ENCODE measurements at regions of chr16 and their contacts with region 1.

Region 1: DNA sequence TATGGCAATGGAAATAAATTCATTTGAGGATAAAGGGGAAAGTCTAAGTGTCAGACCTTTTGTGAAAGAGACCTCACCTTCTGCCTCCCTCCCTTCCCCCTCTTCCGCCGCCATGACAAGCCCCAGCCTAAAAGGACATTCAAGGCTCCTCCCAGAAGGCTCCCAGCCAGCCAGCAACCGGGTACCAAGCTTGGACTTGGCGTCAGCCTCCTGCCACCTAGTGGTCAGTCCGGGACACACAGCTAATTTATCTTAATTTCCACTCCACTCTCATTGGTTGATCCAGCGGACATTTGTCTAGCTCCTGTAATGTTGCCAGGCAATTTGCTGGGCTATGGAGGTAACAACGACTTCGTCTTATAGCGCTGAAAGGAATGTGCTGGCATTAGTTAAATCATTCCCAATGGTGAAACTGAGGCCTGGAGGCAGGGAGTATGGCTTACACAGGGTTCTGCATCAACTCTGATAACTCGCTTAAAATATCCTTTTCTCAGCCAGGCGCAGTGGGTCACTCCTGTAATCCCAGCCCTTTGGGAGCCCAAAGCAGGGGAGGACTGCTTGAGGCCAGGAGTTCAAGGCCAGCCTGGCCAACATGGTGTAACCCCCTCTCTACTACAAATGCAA is 19.3 kb upstream of the CLEC3A start:
- DNase-seq: peak; percentile 90
- H3K4me3 Mint-ChIP-seq: no peak overlapping the region
- H3K27ac Mint-ChIP-seq: no peak overlapping the region
- H3K4me1 Mint-ChIP-seq: peaks cover 7% of the 10 kb centered on the region
- H3K27me3 Mint-ChIP-seq: no peaks in the 10 kb centered on the region
- CTCF ChIP-seq: peak; percentile 91

Region 2: GRCh38 chr16:77675464-77676324 is 327.3 kb before region 1 on chr16:
- CTCF ChIA-PET with region 1: interaction called, 13 read pairs
- POLR2A ChIA-PET with region 1: no interaction called
- intact Hi-C with region 1: loop called (anchors 1 kb)
- DNase-seq: peak; percentile 78
- H3K4me3 Mint-ChIP-seq: no peak overlapping the region
- H3K27ac Mint-ChIP-seq: no peak overlapping the region
- H3K4me1 Mint-ChIP-seq: no peaks in the 10 kb centered on the region
- H3K27me3 Mint-ChIP-seq: peaks cover 7% of the 10 kb centered on the region
- CTCF ChIP-seq: peak; percentile 80

Region 3: GRCh38 chr16:77833921-77834634 is 168.9 kb before region 1 on chr16:
- CTCF ChIA-PET with region 1: no interaction called
- POLR2A ChIA-PET with region 1: no interaction called
- intact Hi-C with region 1: no loop called
- DNase-seq: peak; percentile 72
- H3K4me3 Mint-ChIP-seq: no peak overlapping the region
- H3K27ac Mint-ChIP-seq: no peak overlapping the region
- H3K4me1 Mint-ChIP-seq: peaks cover 13% of the 10 kb centered on the region
- H3K27me3 Mint-ChIP-seq: peaks cover 12% of the 10 kb centered on the region
- CTCF ChIP-seq: no peak

Region 4: GRCh38 chr16:77928096-77928495 is 74.9 kb before region 1 on chr16:
- CTCF ChIA-PET with region 1: no interaction called
- POLR2A ChIA-PET with region 1: no interaction called
- intact Hi-C with region 1: no loop called
- DNase-seq: no peak
- H3K4me3 Mint-ChIP-seq: no peak overlapping the region
- H3K27ac Mint-ChIP-seq: no peak overlapping the region
- H3K4me1 Mint-ChIP-seq: no peaks in the 10 kb centered on the region
- H3K27me3 Mint-ChIP-seq: peaks cover 18% of the 10 kb centered on the region
- CTCF ChIP-seq: no peak

Region 5: GRCh38 chr16:78022347-78023060 is 19.5 kb after region 1 on chr16 and contains the start of gene CLEC3A:
- CTCF ChIA-PET with region 1: interaction called, 22 read pairs
- POLR2A ChIA-PET with region 1: interaction called, 3 read pairs
- intact Hi-C with region 1: no loop called
- DNase-seq: no peak
- H3K4me3 Mint-ChIP-seq: no peak within 1 kb of the TSS
- H3K27ac Mint-ChIP-seq: no peak within 1 kb of the TSS
- H3K4me1 Mint-ChIP-seq: no peaks in the 10 kb centered on the region
- H3K27me3 Mint-ChIP-seq: peaks cover 22% of the 10 kb centered on the region
- CTCF ChIP-seq: no peak
- total RNA-seq, gene CLEC3A: not detected in 2 replicates

Region 6: DNA sequence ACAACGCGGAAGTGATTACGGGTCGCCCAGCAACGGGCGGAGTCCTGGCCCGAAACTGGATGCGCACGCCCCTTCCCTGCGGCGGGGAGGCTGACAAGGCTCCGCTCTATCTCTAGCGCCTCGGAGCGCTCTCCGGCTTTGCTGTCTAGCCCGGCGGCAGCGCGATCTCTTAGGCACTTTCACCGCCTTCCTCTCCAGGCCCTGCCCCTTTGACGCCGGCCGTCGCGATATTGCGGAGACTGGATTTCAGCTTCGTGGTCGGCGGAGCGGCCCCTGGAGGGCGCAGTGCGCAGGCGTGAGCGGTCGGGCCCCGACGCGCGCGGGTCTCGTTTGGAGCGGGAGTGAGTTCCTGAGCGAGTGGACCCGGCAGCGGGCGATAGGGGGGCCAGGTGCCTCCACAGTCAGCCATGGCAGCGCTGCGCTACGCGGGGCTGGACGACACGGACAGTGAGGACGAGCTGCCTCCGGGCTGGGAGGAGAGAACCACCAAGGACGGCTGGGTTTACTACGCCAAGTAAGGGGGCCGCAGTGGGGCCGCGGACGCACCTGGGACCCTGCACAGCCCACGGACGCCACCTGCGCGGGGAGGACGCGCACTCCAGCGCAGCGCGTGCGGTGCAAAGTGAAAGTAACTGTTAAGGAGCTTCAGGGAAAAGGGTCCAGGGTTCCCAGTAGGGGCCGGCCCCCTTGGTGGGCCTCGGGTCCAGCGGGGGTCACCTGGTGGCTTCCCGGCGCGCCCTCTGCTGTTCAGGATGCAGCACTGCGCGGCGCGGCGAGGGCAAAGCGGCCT is 96.5 kb after region 1 on chr16 and contains the start of gene WWOX:
- CTCF ChIA-PET with region 1: interaction called, 49 read pairs
- POLR2A ChIA-PET with region 1: no interaction called
- intact Hi-C with region 1: no loop called
- DNase-seq: peak; percentile 99
- H3K4me3 Mint-ChIP-seq: peak within 1 kb of the TSS; percentile 94
- H3K27ac Mint-ChIP-seq: peak within 1 kb of the TSS; percentile 98
- H3K4me1 Mint-ChIP-seq: peaks cover 34% of the 10 kb centered on the region
- H3K27me3 Mint-ChIP-seq: no peaks in the 10 kb centered on the region
- CTCF ChIP-seq: peak; percentile 99
- total RNA-seq, gene WWOX: 15.5 and 18.1 TPM in 2 replicates

Region 7: GRCh38 chr16:78122774-78123315 is 119.8 kb after region 1 on chr16:
- CTCF ChIA-PET with region 1: interaction called, 35 read pairs
- POLR2A ChIA-PET with region 1: no interaction called
- intact Hi-C with region 1: no loop called
- DNase-seq: peak; percentile 75
- H3K4me3 Mint-ChIP-seq: no peak overlapping the region
- H3K27ac Mint-ChIP-seq: no peak overlapping the region
- H3K4me1 Mint-ChIP-seq: peaks cover 6% of the 10 kb centered on the region
- H3K27me3 Mint-ChIP-seq: no peaks in the 10 kb centered on the region
- CTCF ChIP-seq: peak; percentile 51

Region 8: GRCh38 chr16:78227855-78228254 is 224.8 kb after region 1 on chr16:
- CTCF ChIA-PET with region 1: no interaction called
- POLR2A ChIA-PET with region 1: no interaction called
- intact Hi-C with region 1: no loop called
- DNase-seq: no peak
- H3K4me3 Mint-ChIP-seq: no peak overlapping the region
- H3K27ac Mint-ChIP-seq: no peak overlapping the region
- H3K4me1 Mint-ChIP-seq: peaks cover 9% of the 10 kb centered on the region
- H3K27me3 Mint-ChIP-seq: no peaks in the 10 kb centered on the region
- CTCF ChIP-seq: peak; percentile 11

Region 9: GRCh38 chr16:78742501-78743283 is 739.7 kb after region 1 on chr16:
- CTCF ChIA-PET with region 1: no interaction called
- POLR2A ChIA-PET with region 1: no interaction called
- intact Hi-C with region 1: no loop called
- DNase-seq: no peak
- H3K4me3 Mint-ChIP-seq: no peak overlapping the region
- H3K27ac Mint-ChIP-seq: no peak overlapping the region
- H3K4me1 Mint-ChIP-seq: no peaks in the 10 kb centered on the region
- H3K27me3 Mint-ChIP-seq: no peaks in the 10 kb centered on the region
- CTCF ChIP-seq: no peak

Measured in MCF 10A (cell line).